ENCODE measurements at regions of chr2 and their contacts with region 1.

Region 1: GRCh38 chr2:96208143-96209010 is at the start of gene STARD7:
- DNase-seq: peak; percentile 99
- H3K4me3 Mint-ChIP-seq: peak within 1 kb of the TSS; percentile 90
- H3K27ac Mint-ChIP-seq: peak within 1 kb of the TSS; percentile 81
- H3K4me1 Mint-ChIP-seq: peaks cover 21% of the 10 kb centered on the region
- H3K27me3 Mint-ChIP-seq: no peaks in the 10 kb centered on the region
- CTCF ChIP-seq: no peak
- total RNA-seq, gene STARD7: 119 and 123 TPM in 2 replicates

Region 2: DNA sequence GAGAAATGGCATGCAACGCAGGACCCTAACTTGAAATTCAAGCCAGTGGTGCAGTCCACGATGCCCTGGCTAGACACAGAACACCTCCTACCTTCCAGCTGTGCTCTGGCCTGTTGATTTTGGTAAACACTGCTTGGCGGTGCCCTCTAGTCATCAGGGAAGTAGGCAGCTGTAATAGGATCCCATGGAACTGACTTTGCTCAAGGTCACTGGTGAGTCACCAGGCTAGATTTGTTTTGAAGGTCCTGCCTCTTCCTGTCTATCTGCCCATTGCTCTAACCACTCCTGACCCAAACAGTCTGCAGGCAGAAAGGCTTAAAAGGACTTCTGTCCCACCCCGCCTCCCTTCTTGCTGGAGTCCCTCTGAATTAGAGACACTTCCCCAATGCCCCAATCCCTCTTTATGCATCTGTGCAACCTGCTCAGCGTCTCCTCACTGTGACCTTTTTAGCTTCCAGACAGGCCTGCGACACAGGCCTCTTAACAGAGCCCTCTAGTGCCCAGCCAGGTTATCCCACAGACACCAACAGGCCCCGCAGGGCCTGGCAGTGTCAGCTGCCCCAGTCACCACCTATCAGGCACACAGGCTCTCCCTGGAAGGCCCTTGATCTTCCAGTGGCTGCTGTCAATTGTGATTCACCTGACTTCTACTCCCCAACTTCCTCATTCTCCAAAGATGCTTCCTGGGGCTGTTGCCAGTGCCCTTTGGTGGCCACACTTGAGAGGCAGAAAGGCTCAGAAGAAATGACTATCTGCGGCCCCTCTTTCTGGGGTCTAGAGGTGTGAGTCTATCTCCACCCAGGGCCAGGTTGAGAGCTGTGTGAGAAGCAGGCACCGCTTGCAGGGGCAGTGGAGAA is 52.3 kb after region 1 on chr2:
- CTCF ChIA-PET with region 1: no interaction called
- intact Hi-C with region 1: loop called (anchors 2 kb)
- DNase-seq: peak; percentile 71
- H3K4me3 Mint-ChIP-seq: peak overlapping the region; percentile 49
- H3K27ac Mint-ChIP-seq: peak overlapping the region; percentile 83
- H3K4me1 Mint-ChIP-seq: peaks cover 33% of the 10 kb centered on the region
- H3K27me3 Mint-ChIP-seq: no peaks in the 10 kb centered on the region
- CTCF ChIP-seq: peak; percentile 32